GM10248 (cell line): ENCODE measurements at regions of chr15 and their contacts with region 1.

Region 1: GRCh38 chr15:50003786-50004334 is 115.2 kb downstream of the ATP8B4 start:
- DNase-seq: peak; percentile 65
- CTCF ChIP-seq: peak; percentile 63

Region 2: DNA sequence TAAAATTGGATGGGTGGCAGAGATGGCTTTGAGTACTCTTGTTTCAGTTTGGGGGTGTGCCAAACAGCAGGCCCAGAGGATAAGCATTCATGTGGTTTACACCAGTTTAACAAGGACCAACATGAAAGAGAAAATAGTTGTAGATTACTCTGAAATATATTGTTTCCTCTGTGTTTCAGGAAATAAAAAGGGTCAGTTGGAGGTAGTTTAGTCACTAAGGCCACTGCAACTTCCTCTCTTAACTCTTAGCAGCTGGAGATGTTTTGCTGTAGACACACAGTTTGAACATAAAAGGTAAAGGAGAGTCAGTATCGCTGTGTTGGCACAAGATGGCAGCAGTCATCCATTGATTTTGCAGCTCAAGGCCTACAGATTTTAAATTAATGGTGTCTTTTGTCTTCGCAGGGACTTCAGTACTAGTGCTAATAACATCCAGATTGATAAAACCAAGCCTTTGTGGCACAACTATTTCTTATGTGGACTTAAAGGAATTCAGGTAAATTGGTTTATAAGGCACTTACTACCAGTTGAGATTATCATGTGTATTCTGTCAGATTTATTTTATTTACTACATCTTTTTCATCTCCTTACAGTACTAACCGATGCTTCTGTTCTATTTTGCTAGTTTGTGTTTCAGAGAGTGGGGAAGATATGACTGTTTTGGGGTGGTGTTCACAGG is 768.3 kb before region 1 on chr15:
- CTCF ChIA-PET with region 1: interaction called, 16 read pairs
- POLR2A ChIA-PET with region 1: no interaction called
- DNase-seq: peak; percentile 37
- CTCF ChIP-seq: peak; percentile 72

Region 3: DNA sequence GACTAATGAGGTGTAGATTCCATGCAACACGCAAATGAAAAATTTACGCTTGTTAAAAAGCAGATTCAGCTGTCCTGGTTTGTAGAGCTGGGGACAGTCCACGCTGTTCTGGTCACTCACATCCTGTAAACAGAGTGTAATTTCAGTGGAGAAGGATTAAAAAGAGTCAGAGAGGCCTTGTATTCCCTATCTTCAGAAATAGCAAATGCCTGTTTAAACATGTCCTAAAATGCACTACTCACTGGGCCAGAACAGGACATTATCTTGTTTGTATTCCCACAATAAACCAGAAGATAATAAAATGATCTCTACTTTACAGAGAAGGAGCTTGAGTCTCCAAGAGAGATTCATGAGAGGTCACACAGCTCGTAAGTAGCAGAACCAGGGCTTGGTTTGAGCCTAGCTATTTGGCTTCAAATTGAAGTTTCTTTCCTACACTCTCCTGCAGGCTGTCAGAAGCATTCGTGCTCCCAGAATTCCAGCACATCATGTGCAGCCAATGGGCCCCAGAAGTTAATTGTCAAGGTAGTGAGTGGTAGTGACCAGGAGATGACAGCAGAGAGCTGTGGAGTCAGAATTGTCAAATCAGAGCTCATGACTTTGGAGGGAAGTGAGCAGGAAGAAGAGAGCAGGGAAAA is 127.3 kb before region 1 on chr15:
- CTCF ChIA-PET with region 1: interaction called, 29 read pairs
- POLR2A ChIA-PET with region 1: no interaction called
- DNase-seq: no peak
- CTCF ChIP-seq: peak; percentile 35

Region 4: DNA sequence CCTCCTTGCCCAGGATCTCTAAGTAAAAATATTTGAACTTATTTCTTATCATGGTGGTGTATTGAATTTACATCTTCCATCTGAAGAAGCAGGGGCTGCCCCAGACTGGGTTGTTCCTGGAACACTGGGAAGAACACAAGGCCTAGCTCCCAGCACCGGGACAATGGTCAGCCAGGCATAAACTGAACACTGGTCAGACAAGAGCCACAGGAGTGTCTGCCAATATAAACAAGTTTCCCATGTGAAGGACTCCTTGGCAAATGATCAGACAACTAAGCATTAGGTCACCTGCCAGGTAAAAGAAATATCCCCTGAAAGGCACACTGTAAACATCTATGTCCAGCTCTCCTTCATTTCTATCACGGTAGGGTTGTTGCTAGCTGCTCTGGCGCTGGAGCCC is 57.2 kb before region 1 on chr15:
- CTCF ChIA-PET with region 1: no interaction called
- POLR2A ChIA-PET with region 1: no interaction called
- DNase-seq: no peak
- CTCF ChIP-seq: no peak

Region 5: GRCh38 chr15:50017522-50017921 is 13.7 kb after region 1 on chr15:
- CTCF ChIA-PET with region 1: interaction called, 18 read pairs
- POLR2A ChIA-PET with region 1: no interaction called
- DNase-seq: no peak
- CTCF ChIP-seq: no peak

Region 6: GRCh38 chr15:50077651-50078050 is 73.8 kb after region 1 on chr15:
- CTCF ChIA-PET with region 1: no interaction called
- POLR2A ChIA-PET with region 1: no interaction called
- DNase-seq: no peak
- CTCF ChIP-seq: no peak

Region 7: DNA sequence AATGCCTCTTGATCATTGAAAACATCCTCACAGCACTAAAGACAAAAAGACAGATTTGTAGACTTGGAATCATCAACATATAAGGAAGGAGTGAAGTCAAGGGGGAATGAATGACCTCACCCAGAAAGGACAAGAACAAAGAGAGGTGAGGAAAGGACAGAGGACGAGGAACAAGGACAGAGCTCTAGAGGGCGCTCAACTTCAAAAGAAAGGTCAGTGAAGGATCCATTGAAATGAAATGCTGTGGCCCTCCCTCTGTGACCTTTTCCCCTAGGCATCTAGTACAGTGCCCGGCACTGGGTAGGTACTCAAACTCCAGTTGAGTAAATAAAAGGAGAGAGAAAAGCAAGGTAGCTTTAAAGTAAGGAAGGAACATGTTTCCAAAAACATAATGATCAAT is 112.6 kb after region 1 on chr15:
- CTCF ChIA-PET with region 1: no interaction called
- POLR2A ChIA-PET with region 1: no interaction called
- DNase-seq: peak; percentile 37
- CTCF ChIP-seq: peak; percentile 50